HEK293T (cell line): ENCODE measurements at regions of chr1 and their contacts with region 1.

Region 1: DNA sequence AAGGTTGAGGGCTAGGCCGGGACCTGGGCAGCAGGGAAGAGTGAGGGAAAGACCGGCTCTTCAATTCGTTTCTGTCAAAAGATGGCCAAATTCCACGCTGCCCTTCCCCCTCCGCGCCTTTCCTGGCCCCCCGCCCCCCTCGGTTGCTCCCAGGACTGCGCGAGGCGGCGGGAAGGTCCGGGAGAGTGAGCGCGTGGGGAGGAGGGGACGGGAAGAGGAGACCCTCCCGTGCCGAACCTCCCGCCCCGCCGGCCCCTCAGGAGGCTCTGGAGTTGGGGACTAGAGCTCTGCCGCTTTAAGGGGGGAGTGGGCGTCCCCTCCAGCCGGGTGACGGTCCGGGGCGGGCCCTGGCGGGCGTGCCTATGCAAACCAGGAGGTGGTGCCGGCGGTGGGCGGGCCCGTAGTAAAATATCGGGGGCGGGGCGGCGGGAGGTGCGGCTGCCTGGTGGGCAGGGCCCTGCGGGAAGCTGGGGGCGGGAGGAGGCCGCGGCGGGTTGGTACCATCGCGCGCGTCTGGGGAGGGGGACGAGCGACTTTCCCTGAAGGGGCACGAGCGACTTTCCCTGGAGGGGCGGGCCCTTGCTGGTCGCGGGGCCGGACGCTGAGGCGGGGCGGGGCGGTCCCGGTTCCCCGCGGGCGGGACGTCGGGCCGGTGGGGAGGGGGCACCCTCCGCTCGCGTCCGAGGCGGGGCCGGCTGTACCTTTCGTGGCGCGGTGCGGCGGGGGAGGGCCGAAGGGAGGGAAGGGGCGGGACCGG is 58.2 kb downstream of the BCL9 start:
- DNase-seq: peak; percentile 97

Region 2: DNA sequence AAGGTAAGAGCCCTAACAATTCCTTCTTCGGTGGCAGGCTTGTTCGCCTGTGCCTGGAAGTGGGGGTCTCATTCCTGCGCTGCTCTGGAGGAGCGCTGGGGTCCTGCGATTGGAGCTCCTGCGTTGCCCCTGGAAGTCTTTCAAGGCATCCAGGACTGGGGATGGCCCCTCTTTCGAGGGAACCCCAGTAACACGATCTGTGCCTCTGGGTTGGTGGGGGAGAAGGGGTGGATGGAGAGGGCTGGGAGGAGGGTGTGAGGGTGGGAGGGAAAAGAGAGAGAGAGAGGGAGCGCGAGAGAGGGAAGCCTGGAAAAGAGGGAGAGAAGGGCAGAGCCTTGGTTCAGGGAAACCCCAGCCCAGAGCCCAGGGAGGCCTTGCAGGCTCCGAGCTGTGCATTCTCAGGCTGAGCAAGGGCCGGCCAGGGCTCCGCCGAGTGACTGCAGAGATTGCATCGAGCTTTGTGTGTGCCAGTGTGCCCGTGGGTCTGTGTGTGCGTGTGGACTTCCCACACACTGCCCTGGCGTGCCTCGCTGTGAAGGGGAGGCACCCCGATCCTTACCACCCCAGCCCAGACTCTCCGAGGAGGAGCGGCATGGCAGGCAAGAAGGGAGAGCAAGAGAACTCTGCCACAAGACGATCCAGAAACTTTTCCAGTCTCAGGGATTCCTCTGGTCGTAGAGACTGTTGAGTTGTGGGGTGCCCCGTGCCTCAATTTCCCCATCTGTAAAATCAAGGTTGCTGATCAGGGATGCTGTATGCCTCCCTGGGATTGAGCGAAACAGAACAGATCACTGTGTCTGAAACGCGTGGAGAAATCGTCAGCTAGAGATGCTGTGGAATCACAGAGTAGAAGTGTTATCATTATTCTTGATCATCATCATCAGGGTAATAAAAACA is 57.6 kb before region 1 on chr1:
- CTCF ChIA-PET with region 1: interaction called, 4 read pairs
- POLR2A ChIA-PET with region 1: interaction called, 92 read pairs
- DNase-seq: peak; percentile 50

Region 3: DNA sequence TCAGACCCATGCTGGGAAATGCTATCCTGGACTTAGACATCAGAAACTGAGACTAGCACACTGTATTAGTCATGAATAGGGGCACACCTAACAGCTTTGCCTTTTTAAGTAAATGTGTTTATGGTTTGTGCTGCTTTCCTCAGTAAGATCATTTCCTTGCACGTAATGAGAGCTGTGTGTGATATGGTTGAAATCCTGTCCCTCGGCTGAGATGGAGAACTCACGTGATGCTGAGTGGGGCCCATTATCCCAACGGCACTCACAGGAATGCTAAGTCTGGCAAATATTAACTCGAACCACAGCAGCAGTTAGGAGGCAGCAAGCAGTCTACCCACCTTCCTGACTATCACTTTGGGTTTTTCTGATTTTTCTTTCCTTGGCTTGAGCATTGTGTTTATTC is 20.0 kb before region 1 on chr1:
- CTCF ChIA-PET with region 1: no interaction called
- POLR2A ChIA-PET with region 1: interaction called, 12 read pairs
- DNase-seq: peak; percentile 34

Region 4: DNA sequence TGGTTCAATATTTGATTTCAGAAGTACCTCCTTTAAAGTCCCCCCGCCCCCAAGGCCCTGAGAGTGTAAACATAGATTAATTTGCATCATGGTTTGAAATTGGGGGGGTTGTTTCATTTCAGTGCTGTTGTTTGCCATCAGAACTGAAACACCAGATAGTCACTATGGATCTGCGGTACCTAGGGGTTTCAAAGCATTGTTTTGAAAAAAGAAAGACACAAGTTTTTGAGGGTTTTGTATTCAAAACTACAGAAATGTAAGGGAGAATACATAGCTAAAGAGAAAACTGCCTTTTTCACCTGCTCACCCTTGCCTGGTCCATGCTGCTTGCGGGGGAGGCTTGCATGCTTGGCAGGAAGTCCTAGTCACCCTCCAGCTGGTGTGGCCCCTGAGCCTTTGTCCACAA is 11.5 kb after region 1 on chr1:
- CTCF ChIA-PET with region 1: no interaction called
- POLR2A ChIA-PET with region 1: no interaction called
- DNase-seq: no peak

Region 5: DNA sequence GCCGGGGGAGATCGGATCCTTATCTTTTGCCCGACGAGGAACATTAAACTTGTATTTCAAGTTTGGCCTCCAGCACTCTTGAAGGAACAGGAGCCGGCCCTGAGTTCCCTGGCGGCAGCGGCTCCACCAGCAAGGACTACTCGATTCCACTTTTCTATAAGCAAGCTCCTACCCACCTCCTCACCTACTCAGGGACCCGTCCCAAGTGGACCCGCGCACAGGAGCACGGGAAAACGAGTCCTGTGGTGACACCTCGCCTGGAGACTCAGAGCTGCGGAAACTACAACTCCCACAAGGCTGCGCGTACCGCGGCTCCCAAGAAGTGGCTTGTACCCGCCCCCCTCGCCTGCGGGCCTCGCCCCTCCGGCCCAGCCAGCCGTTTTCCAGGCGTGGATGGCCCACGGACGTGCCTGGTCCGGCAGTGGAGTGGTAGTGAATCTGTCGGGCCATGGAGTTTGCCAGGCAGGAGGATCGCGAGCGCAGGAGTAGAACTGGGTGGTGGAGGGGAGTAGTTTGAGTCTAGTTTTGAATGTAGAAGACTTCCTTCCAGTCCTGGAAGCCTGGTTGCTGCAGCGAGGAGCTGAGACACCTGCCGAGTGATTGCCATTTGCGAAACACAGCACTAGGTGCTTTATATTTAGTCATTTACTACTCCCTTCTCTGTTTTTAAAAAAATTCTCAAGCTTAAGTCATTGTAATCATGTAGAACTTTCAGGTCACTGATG is 70.9 kb after region 1 on chr1 and contains the start of gene ACP6:
- CTCF ChIA-PET with region 1: interaction called, 3 read pairs
- POLR2A ChIA-PET with region 1: interaction called, 10 read pairs
- DNase-seq: peak; percentile 95